AG04449 (cell line): ENCODE measurements at regions of chr4 and their contacts with region 1.

Region 1: DNA sequence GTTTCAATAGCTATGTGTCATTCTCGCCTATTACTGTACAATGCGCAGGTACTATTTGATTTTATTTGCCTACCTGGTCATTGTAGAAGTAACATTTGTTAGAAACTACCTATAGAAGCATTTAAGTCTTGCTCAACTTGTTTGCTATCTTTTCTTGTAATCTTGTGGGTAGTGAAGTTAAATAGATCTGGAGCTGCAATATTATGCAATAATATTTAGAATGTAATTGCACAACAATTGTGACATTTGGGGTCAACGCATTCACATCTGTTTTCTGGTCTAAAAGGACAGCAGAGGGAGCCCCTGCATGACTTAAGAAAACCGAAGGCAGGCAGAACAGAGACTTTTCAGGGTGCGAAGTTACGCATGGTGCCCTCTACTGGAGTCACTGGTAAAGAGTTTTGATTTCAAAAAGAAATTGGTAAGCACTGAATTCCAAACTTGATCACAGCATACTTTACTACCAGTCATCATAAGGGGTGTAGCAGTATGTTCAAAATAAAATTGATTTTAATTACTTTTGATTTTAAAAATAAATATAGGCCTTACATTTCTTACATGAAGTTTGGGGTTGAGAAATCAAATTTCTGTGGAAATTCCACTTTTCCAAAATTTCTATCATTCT is 503.2 kb upstream of the FAM241A start:
- DNase-seq: peak; percentile 67
- H3K4me3 ChIP-seq: no peak overlapping the region
- CTCF ChIP-seq: peak; percentile 82

Region 2: GRCh38 chr4:111631215-111631999 is 10.7 kb before region 1 on chr4:
- CTCF ChIA-PET with region 1: interaction called, 17 read pairs
- POLR2A ChIA-PET with region 1: no interaction called
- DNase-seq: no peak
- H3K4me3 ChIP-seq: no peak overlapping the region
- CTCF ChIP-seq: peak; percentile 33

Region 3: GRCh38 chr4:111778543-111778942 is 136.5 kb after region 1 on chr4:
- CTCF ChIA-PET with region 1: interaction called, 13 read pairs
- POLR2A ChIA-PET with region 1: no interaction called
- DNase-seq: no peak
- H3K4me3 ChIP-seq: no peak overlapping the region
- CTCF ChIP-seq: peak; percentile 6

Region 4: GRCh38 chr4:111854494-111855087 is 212.5 kb after region 1 on chr4:
- CTCF ChIA-PET with region 1: interaction called, 66 read pairs
- POLR2A ChIA-PET with region 1: no interaction called
- DNase-seq: no peak
- H3K4me3 ChIP-seq: no peak overlapping the region
- CTCF ChIP-seq: peak; percentile 53

Region 5: GRCh38 chr4:112031712-112032328 is 389.8 kb after region 1 on chr4:
- CTCF ChIA-PET with region 1: interaction called, 63 read pairs
- POLR2A ChIA-PET with region 1: no interaction called
- DNase-seq: no peak
- H3K4me3 ChIP-seq: no peak overlapping the region
- CTCF ChIP-seq: peak; percentile 57